ENCODE measurements at regions of chr19 and their contacts with region 1.

Region 1: DNA sequence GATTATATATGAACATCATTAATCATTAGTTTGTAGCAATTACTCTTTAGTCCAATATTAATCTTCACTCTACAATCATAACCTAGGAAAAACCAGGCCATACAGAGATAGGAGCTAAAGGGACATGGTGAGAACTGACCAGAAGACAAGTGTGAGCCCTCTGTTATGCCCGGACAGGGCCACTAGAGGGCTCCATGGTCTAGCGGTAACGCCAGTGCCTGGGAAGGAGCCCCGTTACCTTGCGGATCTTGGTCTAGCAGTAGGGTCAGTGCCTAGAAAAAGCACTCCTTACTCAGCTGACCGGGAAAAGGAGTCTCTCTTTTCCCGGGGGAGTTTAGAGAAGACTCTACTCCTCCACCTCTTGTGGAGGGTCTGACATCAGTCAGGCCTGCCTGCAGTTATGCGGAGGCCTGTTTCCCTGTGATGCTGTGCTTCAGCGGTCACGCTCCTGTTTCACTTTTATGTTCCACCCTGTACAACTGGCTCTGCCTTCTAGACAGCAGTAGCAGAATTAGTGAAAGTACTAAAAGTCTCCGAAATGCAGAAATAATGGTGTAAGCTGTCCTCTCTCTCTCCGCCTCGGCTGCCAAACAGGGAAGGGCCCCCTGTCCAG is 13.8 kb downstream of the OR7D4 start:
- DNase-seq: peak; percentile 72 to 83 (median 73)
- ATAC-seq: no peak
- H3K4me3 ChIP-seq: no peak overlapping the region
- H3K27ac ChIP-seq: no peak overlapping the region
- H3K4me1 ChIP-seq: peaks cover 5% of the 10 kb centered on the region
- H3K27me3 ChIP-seq: no peaks in the 10 kb centered on the region
- CTCF ChIP-seq: peak; percentile 55 to 89 (median 82)
- POLR2A ChIP-seq: no peak

Region 2: DNA sequence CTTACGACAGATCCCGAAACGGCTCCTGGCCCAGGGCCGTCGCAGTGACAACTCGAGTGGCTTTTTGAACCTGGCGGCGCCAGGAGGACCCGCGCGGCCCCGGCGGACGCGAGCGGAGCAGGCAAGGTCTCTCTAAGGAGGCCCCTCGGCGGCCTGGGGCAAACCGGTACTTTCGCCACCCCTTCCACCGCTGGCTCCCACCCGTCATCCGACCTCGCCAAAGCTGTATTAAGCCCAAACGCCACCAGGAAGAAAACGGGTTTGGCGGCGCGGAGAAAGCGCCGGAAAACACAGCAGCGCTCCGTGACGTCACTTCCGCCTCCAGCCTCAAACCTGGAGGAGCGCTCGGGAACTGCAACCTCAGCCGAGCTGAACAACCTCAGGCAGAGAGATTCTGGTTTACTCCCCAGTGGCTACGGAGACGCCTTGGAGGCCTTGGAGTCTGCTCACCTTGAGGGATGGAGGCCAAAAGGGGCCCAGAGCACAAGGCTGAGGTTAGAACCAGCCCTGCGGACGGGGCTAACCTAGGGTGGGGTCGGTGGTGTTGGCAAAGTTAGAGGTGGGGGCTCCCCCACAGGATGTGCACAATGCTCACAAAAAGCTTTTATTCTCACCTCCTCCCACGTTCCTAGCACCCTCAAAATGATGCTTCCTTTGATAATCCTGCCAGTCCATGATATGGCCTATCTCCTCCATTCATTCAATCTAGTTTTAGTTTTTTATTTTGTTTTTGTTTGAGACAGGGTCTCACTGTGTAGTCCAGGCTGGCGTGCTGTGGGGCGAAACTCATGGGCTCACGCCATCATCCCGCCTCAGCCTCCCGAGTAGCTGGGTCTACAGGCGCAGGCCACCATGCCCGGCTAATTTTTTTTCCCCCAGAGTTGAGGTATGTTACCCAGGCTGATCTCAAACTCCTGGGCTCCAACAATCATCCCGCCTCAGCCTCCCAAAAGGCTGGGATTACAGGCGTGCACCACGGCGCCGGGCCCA is 230.0 kb after region 1 on chr19 and contains the start of gene ZNF266:
- intact Hi-C with region 1: no loop called
- DNase-seq: peak; percentile 88 to 90 (median 90)
- ATAC-seq: peak; percentile 97
- H3K4me3 ChIP-seq: peak within 1 kb of the TSS; percentile 47 to 67
- H3K27ac ChIP-seq: peak within 1 kb of the TSS; percentile 45 to 87 (median 71)
- H3K4me1 ChIP-seq: peaks cover 20% of the 10 kb centered on the region
- H3K27me3 ChIP-seq: no peaks in the 10 kb centered on the region
- CTCF ChIP-seq: peak; percentile 50 to 93 (median 77)
- POLR2A ChIP-seq: peak in 2 of 3 donors; percentile 55 to 59
- total RNA-seq, gene ZNF266: 12.2 to 13.7 TPM

Region 3: GRCh38 chr19:9785367-9786331 is 580.0 kb after region 1 on chr19:
- intact Hi-C with region 1: loop called (anchors 10 kb)
- DNase-seq: peak; percentile 95 to 99 (median 98)
- ATAC-seq: peak; percentile 89
- H3K4me3 ChIP-seq: peak overlapping the region; percentile 19 to 43
- H3K27ac ChIP-seq: peak overlapping the region; percentile 70 to 99 (median 90)
- H3K4me1 ChIP-seq: peaks cover 18% of the 10 kb centered on the region
- H3K27me3 ChIP-seq: no peaks in the 10 kb centered on the region
- CTCF ChIP-seq: no peak
- POLR2A ChIP-seq: peak; percentile 72 to 91 (median 90)

Region 4: GRCh38 chr19:9801976-9802375 is 596.4 kb after region 1 on chr19:
- intact Hi-C with region 1: loop called (anchors 5 kb)
- DNase-seq: no peak
- ATAC-seq: no peak
- H3K4me3 ChIP-seq: no peak overlapping the region
- H3K27ac ChIP-seq: no peak overlapping the region
- H3K4me1 ChIP-seq: no peaks in the 10 kb centered on the region
- H3K27me3 ChIP-seq: no peaks in the 10 kb centered on the region
- CTCF ChIP-seq: no peak
- POLR2A ChIP-seq: no peak

Measured in body of pancreas (tissue), 4 donors.